ENCODE measurements at regions of chr17 and their contacts with region 1.

Region 1: GRCh38 chr17:8745586-8746500 is 1.2 kb upstream of the CCDC42 start:
- DNase-seq: no peak
- H3K4me3 ChIP-seq: peak overlapping the region; percentile 69
- H3K27me3 ChIP-seq: peaks cover 3% of the 10 kb centered on the region
- CTCF ChIP-seq: peak; percentile 63

Region 2: DNA sequence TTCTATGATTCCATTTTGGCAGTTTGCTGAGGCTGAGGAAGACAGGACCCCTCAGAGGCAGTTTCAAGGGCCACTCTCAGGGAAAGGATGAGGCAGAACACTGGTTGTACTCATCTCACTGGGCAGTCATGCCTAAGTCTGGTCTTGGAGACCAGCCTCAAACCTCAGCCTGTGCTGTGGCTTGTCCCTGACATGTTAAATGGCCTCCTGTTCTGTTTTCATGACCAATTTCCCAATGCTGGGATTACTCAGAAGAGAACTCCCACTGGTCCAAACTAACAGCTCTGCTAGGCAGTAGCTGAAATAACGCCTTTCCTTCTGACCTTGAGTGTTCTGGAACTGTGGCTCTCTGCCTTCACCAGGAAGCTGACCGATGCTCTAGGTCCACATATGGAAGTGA is 20.9 kb after region 1 on chr17:
- CTCF ChIA-PET with region 1: interaction called, 11 read pairs
- POLR2A ChIA-PET with region 1: no interaction called
- DNase-seq: no peak
- H3K4me3 ChIP-seq: no peak overlapping the region
- H3K27me3 ChIP-seq: no peaks in the 10 kb centered on the region
- CTCF ChIP-seq: no peak

Measured in BJ (cell line).